H1 (cell line): ENCODE measurements at regions of chr6 and their contacts with region 1.

Region 1: GRCh38 chr6:41591859-41592502 is 45.8 kb downstream of the FOXP4 start:
- DNase-seq: peak in 1 of 2 experiments; percentile 97
- H3K4me3 ChIP-seq: no peak overlapping the region
- H3K27ac ChIP-seq: no peak overlapping the region
- H3K4me1 ChIP-seq: peaks cover 3 to 17% (median 9%) of the 10 kb centered on the region in 4 experiments
- H3K27me3 ChIP-seq: no peaks in the 10 kb centered on the region
- CTCF ChIP-seq: peak in 2 of 3 experiments; percentile 90 to 91; a peak in 3 of 4 replicates
- EP300 ChIP-seq: no peak
- POLR2A ChIP-seq: no peak
- RAD21 ChIP-seq: peak; percentile 95 to 96

Region 2: DNA sequence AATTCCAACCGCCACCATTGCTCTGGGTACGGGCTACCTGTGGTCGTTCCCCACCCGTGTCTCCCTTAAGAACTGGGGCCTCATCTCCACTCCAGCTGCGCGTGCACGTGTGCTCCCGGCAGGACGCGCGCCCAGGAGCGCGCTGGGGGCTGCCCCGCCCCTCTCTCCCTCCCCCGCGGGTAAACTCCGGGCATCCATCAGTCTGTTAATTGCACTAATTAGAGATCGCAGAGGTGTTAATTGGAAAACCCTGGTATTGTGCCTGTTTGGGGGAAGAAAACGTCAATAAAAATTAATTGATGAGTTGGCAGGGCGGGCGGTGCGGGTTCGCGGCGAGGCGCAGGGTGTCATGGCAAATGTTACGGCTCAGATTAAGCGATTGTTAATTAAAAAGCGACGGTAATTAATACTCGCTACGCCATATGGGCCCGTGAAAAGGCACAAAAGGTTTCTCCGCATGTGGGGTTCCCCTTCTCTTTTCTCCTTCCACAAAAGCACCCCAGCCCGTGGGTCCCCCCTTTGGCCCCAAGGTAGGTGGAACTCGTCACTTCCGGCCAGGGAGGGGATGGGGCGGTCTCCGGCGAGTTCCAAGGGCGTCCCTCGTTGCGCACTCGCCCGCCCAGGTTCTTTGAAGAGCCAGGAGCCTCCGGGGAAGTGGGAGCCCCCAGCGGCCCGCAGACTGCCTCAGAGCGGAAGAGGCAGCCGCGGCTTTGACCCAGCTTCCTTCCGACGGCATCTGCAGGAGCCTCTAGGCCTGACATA is 31.4 kb before region 1 on chr6:
- CTCF ChIA-PET with region 1: interaction called, 11 read pairs
- POLR2A ChIA-PET with region 1: no interaction called
- DNase-seq: peak in 1 of 2 experiments; percentile 80
- H3K4me3 ChIP-seq: peak overlapping the region; percentile 56 to 76 (median 72)
- H3K27ac ChIP-seq: no peak overlapping the region
- H3K4me1 ChIP-seq: peaks cover 24 to 39% (median 29%) of the 10 kb centered on the region in 4 experiments
- H3K27me3 ChIP-seq: peaks cover 0 to 16% (median 12%) of the 10 kb centered on the region in 4 experiments; a peak in 5 of 7 replicates
- CTCF ChIP-seq: no peak
- EP300 ChIP-seq: no peak
- POLR2A ChIP-seq: no peak
- RAD21 ChIP-seq: no peak

Region 3: GRCh38 chr6:41652877-41653644 is 61.1 kb after region 1 on chr6:
- CTCF ChIA-PET with region 1: no interaction called
- POLR2A ChIA-PET with region 1: no interaction called
- DNase-seq: no peak
- H3K4me3 ChIP-seq: no peak overlapping the region
- H3K27ac ChIP-seq: no peak overlapping the region; the same call in 1 of the 2 replicates
- H3K4me1 ChIP-seq: peaks cover 0 to 9% (median 4%) of the 10 kb centered on the region in 4 experiments; a peak in 4 of 7 replicates
- H3K27me3 ChIP-seq: no peaks in the 10 kb centered on the region; a peak in 1 of 7 replicates
- CTCF ChIP-seq: no peak
- EP300 ChIP-seq: no peak
- POLR2A ChIP-seq: no peak
- RAD21 ChIP-seq: no peak